Activated naive CD8-positive, alpha-beta T cell treated with anti-CD3 and anti-CD28 coated beads, Interleukin-2, amount 10 ng/mL, durations not matched to agents 7 days and 5 days (primary cell): ENCODE measurements at regions of chr13 and their contacts with region 1.

Region 1: DNA sequence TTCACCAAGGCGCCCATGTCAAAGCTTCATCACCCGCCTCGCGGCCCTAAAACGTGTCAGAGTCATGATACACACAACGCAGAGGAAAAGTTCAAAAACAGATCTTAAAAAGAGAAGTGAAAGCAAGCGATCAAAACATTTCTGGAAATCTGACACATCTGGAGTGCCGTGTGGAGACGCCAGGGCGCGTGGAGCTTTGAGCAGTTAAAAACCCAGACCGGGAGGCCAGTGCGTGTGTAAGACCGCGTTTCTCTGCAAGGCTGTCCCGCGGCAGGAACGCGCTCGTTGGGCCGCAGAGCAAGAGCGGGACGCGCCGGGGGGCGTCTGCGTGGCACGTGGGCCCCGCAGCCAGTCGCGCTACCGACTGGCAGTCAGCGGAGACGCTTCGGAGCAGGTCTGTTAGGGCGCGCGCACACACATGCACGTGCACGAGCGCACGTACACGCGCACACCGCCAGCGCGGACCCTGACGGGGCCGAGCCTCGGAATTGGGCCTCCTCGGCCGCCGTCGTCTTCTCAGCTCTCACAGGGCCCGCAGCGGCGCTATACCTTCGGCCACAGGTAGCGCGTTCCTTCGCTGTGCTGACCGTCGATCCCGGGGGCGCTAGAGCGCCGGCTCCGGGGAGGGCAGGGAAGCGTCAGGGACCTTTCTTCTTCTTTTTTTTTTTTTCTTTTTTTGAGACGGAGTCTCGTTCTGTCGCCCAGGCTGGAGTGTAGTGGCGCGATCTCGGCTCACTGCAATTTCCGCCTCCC is 35.8 kb downstream of the RNF6 start:
- DNase-seq: peak; percentile 94
- ATAC-seq: peak; percentile 95
- H3K4me3 Mint-ChIP-seq: peak overlapping the region; percentile 90
- H3K27ac Mint-ChIP-seq: peak overlapping the region; percentile 93
- H3K4me1 Mint-ChIP-seq: peaks cover 11% of the 10 kb centered on the region
- H3K27me3 Mint-ChIP-seq: no peaks in the 10 kb centered on the region

Region 2: GRCh38 chr13:26221721-26222519 is 35.6 kb after region 1 on chr13 and contains the start of gene RNF6:
- POLR2A ChIA-PET with region 1: interaction called, 33 read pairs
- DNase-seq: peak; percentile 90
- ATAC-seq: peak; percentile 98
- H3K4me3 Mint-ChIP-seq: peak within 1 kb of the TSS; percentile 99
- H3K27ac Mint-ChIP-seq: peak within 1 kb of the TSS; percentile 100
- H3K4me1 Mint-ChIP-seq: peaks cover 16% of the 10 kb centered on the region
- H3K27me3 Mint-ChIP-seq: no peaks in the 10 kb centered on the region
- total RNA-seq, gene RNF6: 40.4 to 43.3 TPM

Region 3: DNA sequence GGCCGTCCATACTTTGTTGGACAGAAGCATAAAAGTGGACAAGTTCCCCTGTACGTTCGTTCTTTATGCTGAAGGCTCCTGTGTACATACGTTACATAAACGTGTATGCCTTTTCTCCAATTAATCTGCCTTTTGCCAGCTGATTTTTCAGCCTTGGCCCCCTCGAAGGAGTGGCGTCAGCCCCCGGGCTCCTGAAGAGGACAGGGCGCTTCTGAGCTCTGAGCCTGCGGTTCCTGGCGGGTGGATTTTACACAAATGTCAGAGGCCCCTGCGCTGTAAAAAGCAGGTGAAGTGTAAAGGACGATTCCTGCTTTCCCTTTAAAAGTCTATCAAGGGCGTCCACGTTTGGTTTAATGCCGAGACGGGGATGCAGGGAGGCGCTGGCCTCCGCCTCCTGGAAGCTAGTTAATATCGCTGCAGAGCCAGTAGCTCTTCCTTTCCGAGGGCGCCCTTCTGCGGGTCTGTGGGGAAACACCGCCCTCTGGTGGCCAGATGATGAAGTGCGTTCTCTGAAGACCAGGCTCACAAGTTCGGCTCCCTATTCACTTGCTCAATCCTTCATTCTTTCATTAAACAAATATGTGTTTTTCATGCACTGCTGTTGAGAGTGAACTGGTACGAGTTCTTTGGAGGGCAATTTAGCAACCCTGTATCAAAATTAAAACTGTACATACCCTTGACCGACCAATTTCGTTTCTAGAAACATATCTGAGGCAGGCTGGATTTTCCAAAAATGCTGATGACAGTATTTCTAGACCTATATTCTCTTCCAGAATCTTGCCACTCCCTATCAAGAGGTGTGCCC is 512.3 kb after region 1 on chr13:
- POLR2A ChIA-PET with region 1: interaction called, 16 read pairs
- DNase-seq: peak; percentile 86
- ATAC-seq: peak; percentile 45
- H3K4me3 Mint-ChIP-seq: no peak overlapping the region
- H3K27ac Mint-ChIP-seq: no peak overlapping the region
- H3K4me1 Mint-ChIP-seq: no peaks in the 10 kb centered on the region
- H3K27me3 Mint-ChIP-seq: peaks cover 12% of the 10 kb centered on the region